ENCODE measurements at regions of chr11 and their contacts with region 1.

Region 1: GRCh38 chr11:76152086-76152681 is 54.1 kb downstream of the WNT11 start:
- DNase-seq: peak; percentile 57
- ATAC-seq: peak; percentile 96
- H3K4me3 ChIP-seq: no peak overlapping the region
- H3K27ac ChIP-seq: no peak overlapping the region
- H3K4me1 ChIP-seq: peaks cover 0 to 8% of the 10 kb centered on the region in 2 experiments; a peak in 2 of 4 replicates
- H3K27me3 ChIP-seq: no peaks in the 10 kb centered on the region
- CTCF ChIP-seq: peak; percentile 88 to 94 (median 93)
- POLR2A ChIP-seq: no peak
- RAD21 ChIP-seq: peak; percentile 98

Region 2: GRCh38 chr11:75721855-75722668 is 430.1 kb before region 1 on chr11:
- CTCF ChIA-PET with region 1: interaction called, 6 read pairs
- POLR2A ChIA-PET with region 1: no interaction called
- RAD21 ChIA-PET with region 1: no interaction called
- intact Hi-C with region 1: loop called (anchors 1 kb)
- DNase-seq: no peak
- ATAC-seq: no peak
- H3K4me3 ChIP-seq: no peak overlapping the region
- H3K27ac ChIP-seq: no peak overlapping the region
- H3K4me1 ChIP-seq: peaks cover 0 to 4% of the 10 kb centered on the region in 2 experiments; a peak in 1 of 4 replicates
- H3K27me3 ChIP-seq: no peaks in the 10 kb centered on the region
- CTCF ChIP-seq: no peak
- POLR2A ChIP-seq: no peak
- RAD21 ChIP-seq: no peak

Region 3: GRCh38 chr11:75802913-75803820 is 349.0 kb before region 1 on chr11:
- CTCF ChIA-PET with region 1: interaction called, 12 read pairs
- POLR2A ChIA-PET with region 1: no interaction called
- RAD21 ChIA-PET with region 1: interaction called in 1 of 2 experiments, 3 read pairs
- intact Hi-C with region 1: loop called (anchors 2 kb)
- DNase-seq: peak; percentile 46
- ATAC-seq: peak; percentile 98
- H3K4me3 ChIP-seq: no peak overlapping the region
- H3K27ac ChIP-seq: no peak overlapping the region
- H3K4me1 ChIP-seq: no peaks in the 10 kb centered on the region
- H3K27me3 ChIP-seq: no peaks in the 10 kb centered on the region
- CTCF ChIP-seq: peak; percentile 77 to 93 (median 89)
- POLR2A ChIP-seq: no peak
- RAD21 ChIP-seq: peak; percentile 80

Region 4: DNA sequence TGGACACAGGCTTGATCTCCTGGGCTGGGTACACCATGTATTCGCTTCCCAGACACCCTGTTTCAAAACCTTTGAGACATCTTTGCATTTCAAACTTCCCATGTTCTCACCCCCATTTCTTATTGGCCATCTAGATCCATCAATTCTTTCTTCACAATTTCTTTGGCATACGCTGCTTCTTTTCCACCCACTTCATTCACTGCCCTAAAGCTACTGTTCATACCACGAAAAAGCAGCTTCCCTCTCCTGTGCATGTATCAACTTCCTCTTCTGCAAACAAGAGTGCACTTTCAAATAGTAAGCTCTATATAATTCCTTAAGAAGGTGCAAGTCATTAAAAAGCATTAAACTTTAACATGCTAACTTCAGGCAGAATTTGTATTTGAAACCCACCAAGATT is 315.8 kb before region 1 on chr11:
- CTCF ChIA-PET with region 1: no interaction called
- POLR2A ChIA-PET with region 1: no interaction called
- RAD21 ChIA-PET with region 1: no interaction called
- intact Hi-C with region 1: no loop called
- DNase-seq: no peak
- ATAC-seq: no peak
- H3K4me3 ChIP-seq: no peak overlapping the region
- H3K27ac ChIP-seq: no peak overlapping the region
- H3K4me1 ChIP-seq: no peaks in the 10 kb centered on the region
- H3K27me3 ChIP-seq: no peaks in the 10 kb centered on the region
- CTCF ChIP-seq: no peak
- POLR2A ChIP-seq: no peak
- RAD21 ChIP-seq: no peak

Region 5: DNA sequence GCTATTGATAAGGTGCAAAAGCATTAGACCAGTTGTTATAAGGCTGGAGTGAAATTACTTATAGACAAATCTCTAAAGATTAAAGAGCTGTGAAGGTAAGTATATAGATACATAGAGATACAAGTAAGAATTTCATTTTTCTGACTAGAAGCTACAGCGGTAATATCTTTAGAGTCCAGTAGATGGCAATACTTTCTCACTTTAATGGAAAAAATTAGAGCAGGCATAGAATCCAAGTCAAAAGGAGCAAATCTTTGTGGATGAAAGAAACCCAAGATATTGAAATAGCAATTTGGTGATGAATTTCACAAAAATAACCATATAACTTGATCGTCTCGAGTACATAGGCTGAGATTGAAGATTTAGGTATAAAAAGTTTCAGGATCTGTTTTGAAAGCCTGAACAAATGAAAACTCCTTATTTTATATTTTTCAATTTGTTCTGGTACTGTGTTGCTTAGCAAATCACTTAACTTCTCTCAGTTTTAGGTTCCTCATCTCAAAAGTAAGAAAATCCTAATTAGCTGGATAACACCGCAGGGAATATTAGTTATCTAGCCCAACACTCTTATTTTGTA is 255.3 kb before region 1 on chr11:
- CTCF ChIA-PET with region 1: interaction called, 37 read pairs
- POLR2A ChIA-PET with region 1: no interaction called
- RAD21 ChIA-PET with region 1: interaction called, 5 to 7 read pairs
- intact Hi-C with region 1: loop called (anchors 1 kb)
- DNase-seq: peak; percentile 12
- ATAC-seq: peak; percentile 52; the same call in 1 of the 2 replicates
- H3K4me3 ChIP-seq: no peak overlapping the region
- H3K27ac ChIP-seq: no peak overlapping the region
- H3K4me1 ChIP-seq: no peaks in the 10 kb centered on the region
- H3K27me3 ChIP-seq: no peaks in the 10 kb centered on the region
- CTCF ChIP-seq: peak; percentile 32 to 71 (median 69); a peak in 5 of 6 replicates
- POLR2A ChIP-seq: no peak
- RAD21 ChIP-seq: peak; percentile 82

Region 6: DNA sequence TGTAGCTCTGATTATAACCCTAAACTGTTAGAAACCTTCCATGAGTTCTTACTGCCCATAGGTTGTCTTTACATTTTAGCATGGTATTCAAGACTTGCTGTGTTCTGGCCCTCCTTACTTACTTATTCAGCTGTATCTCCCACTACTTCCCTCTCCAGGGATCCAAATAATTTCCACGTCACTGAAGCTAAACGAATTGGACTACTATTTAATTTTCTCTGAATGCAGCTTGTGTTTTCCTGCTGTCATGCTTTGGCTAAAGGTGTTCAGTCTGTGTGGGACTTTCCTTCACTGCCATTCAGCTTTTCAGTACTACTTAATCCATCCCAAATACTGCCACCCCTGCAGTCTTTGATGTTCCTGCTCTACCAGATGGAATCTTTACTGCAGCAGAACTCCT is 248.9 kb before region 1 on chr11:
- CTCF ChIA-PET with region 1: interaction called, 37 read pairs
- POLR2A ChIA-PET with region 1: no interaction called
- RAD21 ChIA-PET with region 1: no interaction called
- intact Hi-C with region 1: no loop called
- DNase-seq: no peak
- ATAC-seq: no peak
- H3K4me3 ChIP-seq: no peak overlapping the region
- H3K27ac ChIP-seq: no peak overlapping the region
- H3K4me1 ChIP-seq: no peaks in the 10 kb centered on the region
- H3K27me3 ChIP-seq: no peaks in the 10 kb centered on the region
- CTCF ChIP-seq: no peak
- POLR2A ChIP-seq: no peak
- RAD21 ChIP-seq: no peak

Region 7: DNA sequence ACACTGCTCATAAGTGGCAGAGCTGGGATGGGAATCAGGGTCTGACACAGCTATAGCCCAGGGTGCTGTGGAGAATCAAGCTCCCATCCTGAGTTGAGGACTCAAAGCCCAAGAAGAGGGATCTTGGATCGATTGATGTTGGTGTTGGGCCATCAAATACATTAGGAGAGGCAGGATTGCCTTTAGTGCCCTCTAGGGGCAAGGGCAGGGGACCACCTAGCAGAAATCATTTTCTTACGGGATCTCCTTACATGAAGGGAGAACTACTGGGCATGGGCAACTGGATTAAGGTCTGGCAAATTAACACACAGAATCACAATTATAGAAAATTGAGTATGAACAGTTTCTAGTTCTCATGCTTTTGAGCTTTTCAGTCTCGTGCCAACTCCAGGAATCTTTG is 267.7 kb after region 1 on chr11:
- CTCF ChIA-PET with region 1: no interaction called
- POLR2A ChIA-PET with region 1: no interaction called
- RAD21 ChIA-PET with region 1: no interaction called
- intact Hi-C with region 1: no loop called
- DNase-seq: no peak
- ATAC-seq: peak; percentile 75
- H3K4me3 ChIP-seq: no peak overlapping the region
- H3K27ac ChIP-seq: no peak overlapping the region
- H3K4me1 ChIP-seq: no peaks in the 10 kb centered on the region
- H3K27me3 ChIP-seq: no peaks in the 10 kb centered on the region
- CTCF ChIP-seq: peak; percentile 12 to 58 (median 51); a peak in 5 of 6 replicates
- POLR2A ChIP-seq: no peak
- RAD21 ChIP-seq: peak; percentile 34; the same call in 1 of the 2 replicates

Region 8: GRCh38 chr11:76946245-76946644 is 794.1 kb after region 1 on chr11:
- CTCF ChIA-PET with region 1: no interaction called
- POLR2A ChIA-PET with region 1: no interaction called
- RAD21 ChIA-PET with region 1: no interaction called
- intact Hi-C with region 1: no loop called
- DNase-seq: no peak
- ATAC-seq: no peak
- H3K4me3 ChIP-seq: no peak overlapping the region
- H3K27ac ChIP-seq: no peak overlapping the region
- H3K4me1 ChIP-seq: no peaks in the 10 kb centered on the region
- H3K27me3 ChIP-seq: no peaks in the 10 kb centered on the region
- CTCF ChIP-seq: no peak
- POLR2A ChIP-seq: no peak
- RAD21 ChIP-seq: no peak

Measured in HCT116 (cell line).